T-cell (primary cell): ENCODE measurements at regions of chr15 and their contacts with region 1.

Region 1: GRCh38 chr15:49169880-49170597 is at the start of gene GALK2:
- DNase-seq: peak; percentile 50 to 88 (median 78)
- ATAC-seq: peak; percentile 97
- H3K4me3 ChIP-seq: peak within 1 kb of the TSS; percentile 68 to 99
- H3K4me3 Mint-ChIP-seq: peak within 1 kb of the TSS; percentile 91 to 98 (median 98)
- H3K27ac ChIP-seq: peak within 1 kb of the TSS; percentile 80
- H3K27ac Mint-ChIP-seq: peak within 1 kb of the TSS; percentile 99
- H3K4me1 ChIP-seq: peaks cover 12 to 14% of the 10 kb centered on the region in 2 experiments
- H3K4me1 Mint-ChIP-seq: peaks cover 31 to 46% (median 43%) of the 10 kb centered on the region in 3 donors
- H3K27me3 ChIP-seq: no peaks in the 10 kb centered on the region
- H3K27me3 Mint-ChIP-seq: no peaks in the 10 kb centered on the region
- total RNA-seq, gene GALK2: 18.5 to 26.3 (median 25.7) TPM

Region 2: GRCh38 chr15:49155110-49155833 is 14.8 kb before region 1 on chr15 and contains the start of gene COPS2:
- CTCF ChIA-PET with region 1: interaction called in 1 of 2 experiments, 9 read pairs
- POLR2A ChIA-PET with region 1: interaction called, 14 to 19 read pairs
- DNase-seq: peak; percentile 82 to 97 (median 91)
- ATAC-seq: peak; percentile 93 to 97 (median 95)
- H3K4me3 ChIP-seq: peak within 1 kb of the TSS; percentile 88 to 94
- H3K4me3 Mint-ChIP-seq: peak within 1 kb of the TSS; percentile 99 to 100 (median 100)
- H3K27ac ChIP-seq: peak within 1 kb of the TSS; percentile 91
- H3K27ac Mint-ChIP-seq: peak within 1 kb of the TSS; percentile 97 to 98
- H3K4me1 ChIP-seq: peaks cover 8 to 17% of the 10 kb centered on the region in 2 experiments
- H3K4me1 Mint-ChIP-seq: peaks cover 56 to 62% (median 60%) of the 10 kb centered on the region in 3 donors
- H3K27me3 ChIP-seq: no peaks in the 10 kb centered on the region
- H3K27me3 Mint-ChIP-seq: no peaks in the 10 kb centered on the region
- total RNA-seq, gene COPS2: 41.3 to 104 (median 45.6) TPM